Activated CD4-positive, alpha-beta memory T cell treated with anti-CD3 and anti-CD28 coated beads for 36 hours (primary cell): ENCODE measurements at regions of chr2 and their contacts with region 1.

Region 1: GRCh38 chr2:234288974-234289455 is 207.9 kb downstream of the ARL4C start:
- DNase-seq: peak; percentile 87
- H3K4me3 Mint-ChIP-seq: peak overlapping the region; percentile 49
- H3K27ac Mint-ChIP-seq: peak overlapping the region; percentile 95
- H3K4me1 Mint-ChIP-seq: peaks cover 65% of the 10 kb centered on the region
- H3K27me3 Mint-ChIP-seq: no peaks in the 10 kb centered on the region

Region 2: DNA sequence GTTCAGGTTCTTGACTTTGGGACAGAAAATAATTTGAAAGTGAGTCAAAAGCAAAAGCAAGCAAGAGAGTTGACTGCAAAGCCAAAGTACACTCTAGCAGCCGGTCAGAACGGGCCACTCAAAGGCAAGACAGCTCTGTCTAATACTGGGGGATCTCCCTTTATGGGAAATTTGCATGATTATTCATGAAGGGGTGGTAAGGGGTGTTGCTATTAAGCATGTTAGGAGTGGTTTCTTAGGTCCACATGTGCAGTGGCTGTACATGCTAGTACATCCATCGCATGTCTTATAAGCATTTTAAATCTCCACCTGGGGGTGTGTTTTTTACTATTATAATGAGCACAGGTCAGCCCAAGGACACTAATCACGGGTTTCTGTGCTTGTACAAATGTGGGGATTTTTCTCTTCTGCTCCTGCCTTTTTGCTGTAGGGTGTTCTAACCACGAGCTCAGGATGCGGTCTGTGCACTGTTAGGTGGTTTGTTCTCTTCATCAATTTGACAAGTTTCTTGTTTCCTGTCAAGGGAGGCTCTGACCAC is 298.7 kb before region 1 on chr2:
- CTCF ChIA-PET with region 1: no interaction called
- POLR2A ChIA-PET with region 1: no interaction called
- intact Hi-C with region 1: loop called (anchors 5 kb)
- DNase-seq: peak; percentile 81
- H3K4me3 Mint-ChIP-seq: peak overlapping the region; percentile 17
- H3K27ac Mint-ChIP-seq: peak overlapping the region; percentile 49
- H3K4me1 Mint-ChIP-seq: peaks cover 51% of the 10 kb centered on the region
- H3K27me3 Mint-ChIP-seq: no peaks in the 10 kb centered on the region

Region 3: GRCh38 chr2:234146087-234146826 is 142.8 kb before region 1 on chr2:
- CTCF ChIA-PET with region 1: no interaction called
- POLR2A ChIA-PET with region 1: no interaction called
- intact Hi-C with region 1: no loop called
- DNase-seq: peak; percentile 38
- H3K4me3 Mint-ChIP-seq: peak overlapping the region; percentile 45
- H3K27ac Mint-ChIP-seq: peak overlapping the region; percentile 38
- H3K4me1 Mint-ChIP-seq: peaks cover 40% of the 10 kb centered on the region
- H3K27me3 Mint-ChIP-seq: no peaks in the 10 kb centered on the region

Region 4: DNA sequence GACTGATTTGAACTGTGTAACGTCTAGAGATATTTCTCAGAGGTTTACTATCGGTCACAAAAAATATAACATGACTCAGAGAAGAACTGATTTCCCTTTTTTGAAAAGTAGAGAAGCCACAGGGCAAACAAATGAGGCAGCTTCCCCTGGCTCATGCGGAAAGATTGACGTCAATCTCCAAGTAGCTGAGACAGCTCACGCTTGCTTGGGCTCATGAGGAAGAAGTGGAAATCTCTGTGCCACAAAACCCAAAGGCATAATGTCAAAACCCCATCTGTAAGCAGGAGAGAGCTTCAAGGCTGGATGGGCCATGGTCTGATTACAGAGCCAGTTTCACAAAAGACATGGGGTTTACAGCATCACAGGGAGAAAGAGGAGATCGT is 19.8 kb after region 1 on chr2:
- CTCF ChIA-PET with region 1: interaction called, 21 read pairs
- POLR2A ChIA-PET with region 1: interaction called, 40 read pairs
- intact Hi-C with region 1: loop called (anchors 1 kb)
- DNase-seq: peak; percentile 88
- H3K4me3 Mint-ChIP-seq: peak overlapping the region; percentile 38
- H3K27ac Mint-ChIP-seq: peak overlapping the region; percentile 89
- H3K4me1 Mint-ChIP-seq: peaks cover 56% of the 10 kb centered on the region
- H3K27me3 Mint-ChIP-seq: no peaks in the 10 kb centered on the region

Region 5: GRCh38 chr2:234425619-234426603 is 136.9 kb after region 1 on chr2:
- CTCF ChIA-PET with region 1: interaction called, 5 read pairs
- POLR2A ChIA-PET with region 1: no interaction called
- intact Hi-C with region 1: loop called (anchors 1 kb)
- DNase-seq: peak; percentile 78
- H3K4me3 Mint-ChIP-seq: peak overlapping the region; percentile 73
- H3K27ac Mint-ChIP-seq: peak overlapping the region; percentile 81
- H3K4me1 Mint-ChIP-seq: peaks cover 79% of the 10 kb centered on the region
- H3K27me3 Mint-ChIP-seq: no peaks in the 10 kb centered on the region

Region 6: GRCh38 chr2:234474654-234475053 is 185.6 kb after region 1 on chr2:
- CTCF ChIA-PET with region 1: interaction called, 9 read pairs
- POLR2A ChIA-PET with region 1: interaction called, 4 read pairs
- intact Hi-C with region 1: loop called (anchors 1 kb)
- DNase-seq: no peak
- H3K4me3 Mint-ChIP-seq: no peak overlapping the region
- H3K27ac Mint-ChIP-seq: peak overlapping the region; percentile 88
- H3K4me1 Mint-ChIP-seq: peaks cover 57% of the 10 kb centered on the region
- H3K27me3 Mint-ChIP-seq: no peaks in the 10 kb centered on the region

Region 7: DNA sequence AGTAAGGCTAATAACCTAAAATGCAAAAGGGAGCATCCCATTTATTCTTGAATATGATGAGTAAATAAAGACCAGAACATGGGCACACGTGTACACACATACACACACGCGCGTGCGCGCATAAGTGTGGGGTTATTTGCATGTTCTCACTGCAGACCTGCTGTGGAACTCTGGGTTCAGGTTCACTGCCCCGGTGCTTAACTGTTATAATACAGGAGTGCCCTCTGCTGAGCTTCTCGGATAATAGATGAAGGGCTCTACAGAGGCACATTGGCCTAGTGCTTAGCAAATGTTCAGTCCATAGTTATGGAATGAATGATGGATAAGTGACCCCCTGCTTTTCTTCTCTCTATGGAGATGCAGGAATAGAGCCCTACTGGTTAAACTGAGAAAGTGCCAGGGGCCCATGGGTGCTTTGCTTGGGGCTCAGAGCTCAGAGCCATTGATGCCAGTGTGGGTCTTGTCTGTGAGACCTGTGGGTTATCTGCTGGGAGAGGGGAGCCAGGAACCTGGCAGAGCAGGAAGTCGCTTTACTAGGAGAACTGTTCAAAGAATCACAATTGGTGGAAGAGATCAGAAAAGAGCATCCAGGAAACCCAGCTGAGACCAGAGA is 211.5 kb after region 1 on chr2:
- CTCF ChIA-PET with region 1: interaction called, 90 read pairs
- POLR2A ChIA-PET with region 1: interaction called, 93 read pairs
- intact Hi-C with region 1: loop called (anchors 1 kb)
- DNase-seq: peak; percentile 84
- H3K4me3 Mint-ChIP-seq: no peak overlapping the region
- H3K27ac Mint-ChIP-seq: peak overlapping the region; percentile 15
- H3K4me1 Mint-ChIP-seq: peaks cover 26% of the 10 kb centered on the region
- H3K27me3 Mint-ChIP-seq: no peaks in the 10 kb centered on the region